Transverse colon (tissue), 4 donors: ENCODE measurements at regions of chr1 and their contacts with region 1.

Region 1: DNA sequence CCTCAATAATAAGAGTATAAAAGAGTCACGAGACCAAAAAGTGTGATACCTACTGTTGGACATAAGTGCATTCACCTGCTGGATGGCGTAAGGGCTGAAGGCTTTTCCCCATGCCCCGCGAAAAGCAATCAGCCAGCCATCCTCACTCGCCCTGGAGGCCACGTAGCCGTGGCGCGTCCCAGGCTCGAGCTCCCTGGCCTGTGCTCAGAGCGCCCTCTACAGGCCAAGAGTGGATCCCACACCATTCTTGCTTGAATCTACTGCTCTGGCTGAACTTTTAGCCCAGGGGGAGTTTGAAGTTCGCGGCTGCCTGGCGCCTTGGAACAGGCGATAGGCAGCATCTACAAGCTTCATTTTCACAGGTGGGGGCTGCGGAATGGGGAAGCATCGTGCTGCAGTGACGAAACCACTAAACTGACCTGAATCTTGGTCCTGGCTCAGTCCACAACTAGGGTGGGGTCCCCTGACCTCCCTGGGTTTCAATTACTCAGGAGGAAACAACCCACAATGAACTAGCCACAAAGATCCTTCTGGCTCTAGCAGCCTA is 70.3 kb upstream of the SERBP1 start:
- DNase-seq: peak; percentile 89
- H3K4me3 ChIP-seq: no peak overlapping the region
- H3K27ac ChIP-seq: no peak overlapping the region
- H3K4me1 ChIP-seq: peaks cover 0 to 7% (median 1%) of the 10 kb centered on the region in 4 donors
- H3K27me3 ChIP-seq: no peaks in the 10 kb centered on the region
- CTCF ChIP-seq: peak; percentile 94 to 98 (median 98)
- EP300 ChIP-seq: no peak
- POLR2A ChIP-seq: no peak

Region 2: DNA sequence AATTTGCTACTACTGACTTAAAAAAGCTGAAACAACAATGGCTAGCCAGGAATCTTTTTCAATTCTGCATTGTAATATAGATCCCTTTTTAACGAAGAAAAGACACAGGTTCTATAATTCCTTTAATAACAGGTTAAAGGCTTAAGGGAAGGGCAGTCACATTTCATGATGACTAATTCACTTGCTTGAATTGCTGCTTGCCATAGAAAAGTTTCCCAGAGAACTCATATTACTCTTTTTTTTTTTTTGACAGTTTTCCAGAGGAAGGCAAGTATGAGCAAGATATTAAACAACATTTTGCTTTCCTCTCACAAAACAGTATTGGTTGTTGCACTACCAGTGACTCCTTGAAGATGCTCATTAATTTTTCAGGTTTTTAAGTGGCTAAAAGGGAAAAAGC is 273.3 kb before region 1 on chr1:
- in situ Hi-C with region 1: loop called in 3 of 4 experiments (anchors 10 kb)
- intact Hi-C with region 1: no loop called
- DNase-seq: no peak
- H3K4me3 ChIP-seq: no peak overlapping the region
- H3K27ac ChIP-seq: no peak overlapping the region
- H3K4me1 ChIP-seq: no peaks in the 10 kb centered on the region
- H3K27me3 ChIP-seq: no peaks in the 10 kb centered on the region
- CTCF ChIP-seq: no peak
- EP300 ChIP-seq: no peak
- POLR2A ChIP-seq: no peak

Region 3: GRCh38 chr1:67239738-67240137 is 260.7 kb before region 1 on chr1:
- in situ Hi-C with region 1: loop called in 3 of 4 experiments (anchors 5 to 10 kb)
- intact Hi-C with region 1: no loop called
- DNase-seq: no peak
- H3K4me3 ChIP-seq: no peak overlapping the region
- H3K27ac ChIP-seq: no peak overlapping the region
- H3K4me1 ChIP-seq: peaks cover 0 to 13% (median 4%) of the 10 kb centered on the region in 4 donors
- H3K27me3 ChIP-seq: no peaks in the 10 kb centered on the region
- CTCF ChIP-seq: no peak
- EP300 ChIP-seq: no peak
- POLR2A ChIP-seq: no peak

Region 4: DNA sequence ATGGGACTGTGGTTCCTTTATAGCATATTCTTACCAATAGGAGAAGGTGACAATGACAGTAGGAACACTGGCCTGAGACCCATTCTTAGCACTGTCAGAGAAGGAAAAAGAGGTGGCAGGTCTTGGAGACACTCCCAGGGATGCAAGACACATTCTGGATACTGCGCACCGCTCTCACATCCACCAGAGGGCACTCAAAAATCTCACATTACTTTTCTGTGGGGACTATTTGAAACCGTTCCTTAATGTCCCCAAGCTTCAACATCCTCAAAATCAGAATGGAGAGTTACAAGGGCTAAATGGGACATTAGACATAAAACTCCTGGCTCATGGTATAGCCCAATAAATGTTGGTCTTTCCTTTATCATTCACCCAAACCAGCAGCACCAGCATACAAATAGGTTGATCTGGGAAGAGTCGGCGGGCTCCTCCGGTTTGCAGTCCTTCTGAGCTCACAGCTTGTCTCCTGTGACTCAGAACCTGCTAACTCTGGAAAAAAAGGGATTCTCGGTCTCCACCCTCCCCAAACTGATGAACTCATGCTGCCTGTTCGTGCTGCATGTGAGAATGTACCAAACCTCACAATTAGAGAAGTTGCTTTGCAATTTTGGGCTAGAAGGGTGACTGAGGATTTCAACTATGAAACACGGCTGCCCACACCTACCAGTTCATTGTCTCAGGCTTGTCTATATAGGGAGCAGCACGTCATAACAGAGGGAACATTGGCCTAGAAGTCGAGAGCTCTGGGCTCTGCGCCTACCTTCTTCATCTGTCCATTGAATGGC is 152.6 kb before region 1 on chr1:
- in situ Hi-C with region 1: loop called (anchors 5 to 10 kb)
- intact Hi-C with region 1: loop called (anchors 1 kb)
- DNase-seq: peak; percentile 12
- H3K4me3 ChIP-seq: no peak overlapping the region
- H3K27ac ChIP-seq: no peak overlapping the region
- H3K4me1 ChIP-seq: no peaks in the 10 kb centered on the region
- H3K27me3 ChIP-seq: no peaks in the 10 kb centered on the region
- CTCF ChIP-seq: peak; percentile 47 to 64 (median 57)
- EP300 ChIP-seq: no peak
- POLR2A ChIP-seq: no peak

Region 5: DNA sequence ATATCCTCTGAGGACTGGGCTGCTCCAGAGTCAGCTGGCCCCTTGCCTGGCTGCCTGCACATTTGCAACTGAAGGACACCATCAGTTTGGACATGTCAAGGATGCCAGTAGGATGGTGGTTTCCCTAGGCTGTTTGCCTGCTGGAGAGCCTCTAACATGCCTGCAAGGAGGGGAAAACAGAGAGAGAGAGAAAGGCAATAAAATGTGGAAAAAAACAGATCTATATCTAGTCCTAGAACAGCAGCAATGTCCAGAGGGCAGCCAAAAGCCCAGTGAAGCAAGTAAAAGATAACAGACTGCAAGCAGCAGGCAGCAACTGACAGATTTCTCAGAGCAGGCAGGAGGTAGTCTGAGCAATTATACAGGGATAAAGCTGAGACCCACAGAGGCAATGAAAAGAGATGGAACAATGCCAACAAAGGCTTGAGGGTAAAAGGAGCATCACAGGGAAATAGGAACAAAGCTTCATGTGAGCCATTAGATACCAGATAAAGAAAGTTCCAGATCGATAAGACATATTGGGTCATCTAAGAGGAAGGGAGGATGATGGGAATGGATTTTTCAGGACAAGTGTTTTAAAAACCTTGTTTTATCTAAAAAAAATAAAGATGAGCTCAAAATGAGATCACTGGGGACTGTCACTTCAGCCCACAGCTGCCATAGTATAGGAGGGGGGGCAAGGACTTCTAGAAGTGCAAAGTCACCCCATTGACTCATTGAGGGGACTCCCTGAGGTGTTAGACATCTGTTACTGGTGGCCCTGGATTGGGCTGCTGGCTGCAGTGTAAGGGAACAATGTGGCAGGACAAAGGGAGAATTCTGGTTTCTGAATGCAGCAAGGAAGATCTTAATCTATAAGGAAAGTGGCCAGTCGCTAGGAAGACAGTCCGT is 145.9 kb after region 1 on chr1:
- in situ Hi-C with region 1: no loop called
- intact Hi-C with region 1: no loop called
- DNase-seq: no peak
- H3K4me3 ChIP-seq: no peak overlapping the region
- H3K27ac ChIP-seq: peak overlapping the region; percentile 38 to 61 (median 58)
- H3K4me1 ChIP-seq: peaks cover 12 to 36% (median 20%) of the 10 kb centered on the region in 4 donors
- H3K27me3 ChIP-seq: no peaks in the 10 kb centered on the region
- CTCF ChIP-seq: no peak
- EP300 ChIP-seq: no peak
- POLR2A ChIP-seq: no peak

Region 6: DNA sequence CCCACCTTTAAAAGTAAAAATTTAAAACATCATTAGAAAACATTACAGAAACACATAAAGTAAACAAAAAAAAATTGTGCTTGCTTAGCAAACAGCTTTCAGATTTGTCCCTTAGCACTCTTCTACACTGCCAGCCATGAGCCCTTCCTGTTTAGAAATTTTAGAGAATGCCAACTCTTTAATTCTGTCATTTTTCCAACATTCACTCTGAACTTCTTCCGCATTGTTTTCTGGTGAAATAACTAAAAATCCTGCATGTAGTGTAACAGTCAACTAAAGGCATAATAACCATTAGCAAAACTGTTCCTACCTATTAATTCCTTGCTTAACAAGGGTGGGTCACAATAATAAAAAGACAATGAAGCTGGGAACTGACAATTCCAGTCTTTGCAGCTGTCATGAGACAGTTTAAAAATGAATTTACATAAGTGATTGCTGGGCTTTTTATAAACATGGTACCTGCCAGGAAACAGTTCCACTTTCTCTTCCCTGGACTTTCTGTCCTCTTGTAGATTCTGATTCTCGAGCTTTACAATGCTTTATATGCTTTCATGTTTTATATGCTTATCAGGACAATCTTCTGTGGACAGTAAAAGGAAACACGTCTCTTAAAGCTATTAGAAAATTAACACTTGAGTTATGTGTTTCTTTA is 313.8 kb after region 1 on chr1:
- in situ Hi-C with region 1: no loop called
- intact Hi-C with region 1: no loop called
- DNase-seq: no peak
- H3K4me3 ChIP-seq: no peak overlapping the region
- H3K27ac ChIP-seq: peak overlapping the region; percentile 85 to 89 (median 88)
- H3K4me1 ChIP-seq: peaks cover 25 to 77% (median 43%) of the 10 kb centered on the region in 4 donors
- H3K27me3 ChIP-seq: no peaks in the 10 kb centered on the region
- CTCF ChIP-seq: no peak
- EP300 ChIP-seq: no peak
- POLR2A ChIP-seq: no peak